PC-9 (cell line): ENCODE measurements at regions of chr17 and their contacts with region 1.

Region 1: DNA sequence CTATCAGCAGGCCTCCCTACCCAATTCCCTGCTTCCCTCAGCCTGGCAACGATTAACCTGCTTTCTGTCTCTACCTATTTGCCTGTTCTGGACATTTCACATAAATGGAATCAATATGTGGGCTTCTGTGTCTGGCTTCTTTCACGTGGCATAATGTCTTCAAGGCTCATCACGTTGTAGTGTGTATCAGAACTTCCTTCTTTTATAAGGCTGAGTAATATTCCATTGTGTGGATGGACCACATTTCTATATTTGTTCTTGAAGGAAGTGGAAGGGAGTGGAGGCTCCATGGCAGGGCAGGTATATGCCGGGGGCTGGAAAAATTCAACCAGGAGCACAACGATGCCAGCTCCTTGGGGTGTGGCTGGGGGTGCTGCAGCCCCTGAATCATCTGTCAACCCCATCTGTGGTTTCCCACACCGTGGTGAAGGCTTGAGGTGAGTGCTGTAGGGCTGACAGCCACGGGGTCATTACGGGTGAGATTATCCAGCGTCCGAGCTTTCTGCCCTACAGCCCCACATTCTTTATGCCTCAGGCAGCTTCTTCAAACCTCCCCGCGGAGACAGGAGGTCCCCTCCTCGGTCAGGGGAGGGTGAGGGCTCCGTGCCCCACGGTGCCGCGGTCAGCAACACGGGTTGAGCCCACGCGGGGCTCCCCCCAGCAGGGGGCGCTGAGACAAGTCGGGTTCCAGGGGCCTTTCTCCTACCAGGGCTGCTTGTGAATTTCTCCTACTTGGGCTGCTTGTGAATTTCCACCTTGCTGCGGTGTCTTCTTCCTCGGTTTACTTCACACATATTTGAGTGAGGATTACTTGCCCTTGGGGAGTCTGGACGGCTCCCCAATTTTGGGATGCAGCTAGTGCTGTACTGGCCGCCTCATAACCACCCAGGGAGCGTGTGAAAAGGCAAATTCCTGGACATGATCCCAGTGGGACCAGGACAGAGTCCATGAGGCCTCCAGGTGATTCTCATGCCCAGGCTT is 18.3 kb upstream of the WFIKKN2 start:
- DNase-seq: peak in 1 of 2 experiments; percentile 24
- H3K4me3 ChIP-seq: no peak overlapping the region
- H3K27ac ChIP-seq: no peak overlapping the region
- H3K4me1 ChIP-seq: peaks cover 20% of the 10 kb centered on the region
- H3K27me3 ChIP-seq: no peaks in the 10 kb centered on the region
- CTCF ChIP-seq: peak; percentile 76

Region 2: DNA sequence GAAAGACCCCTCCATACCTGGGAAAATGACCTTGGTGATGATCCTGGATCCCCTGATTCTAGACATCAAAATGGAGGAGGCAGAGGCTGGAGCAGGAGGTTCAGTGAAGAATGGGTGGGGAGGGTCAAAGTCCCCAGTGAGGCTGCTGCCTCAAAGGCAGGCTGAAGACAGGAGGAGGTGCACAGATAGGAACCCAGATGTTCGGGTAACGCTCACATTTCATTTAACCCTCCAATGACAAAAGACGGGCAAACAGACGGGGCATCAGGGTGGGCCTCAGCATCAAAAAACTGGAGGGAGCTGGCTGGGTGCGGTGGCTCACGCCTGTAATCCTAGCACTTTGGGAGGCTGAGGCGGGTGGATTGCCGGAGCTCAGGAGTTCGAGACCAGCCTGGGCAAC is 49.6 kb before region 1 on chr17 and contains the start of gene ANKRD40CL:
- CTCF ChIA-PET with region 1: interaction called, 24 read pairs
- POLR2A ChIA-PET with region 1: no interaction called
- intact Hi-C with region 1: no loop called
- DNase-seq: no peak
- H3K4me3 ChIP-seq: peak within 1 kb of the TSS; percentile 30; the same call in 1 of the 2 replicates
- H3K27ac ChIP-seq: peak within 1 kb of the TSS; percentile 54
- H3K4me1 ChIP-seq: peaks cover 32% of the 10 kb centered on the region
- H3K27me3 ChIP-seq: no peaks in the 10 kb centered on the region
- CTCF ChIP-seq: no peak
- total RNA-seq, gene ANKRD40CL: not detected in 2 replicates

Region 3: DNA sequence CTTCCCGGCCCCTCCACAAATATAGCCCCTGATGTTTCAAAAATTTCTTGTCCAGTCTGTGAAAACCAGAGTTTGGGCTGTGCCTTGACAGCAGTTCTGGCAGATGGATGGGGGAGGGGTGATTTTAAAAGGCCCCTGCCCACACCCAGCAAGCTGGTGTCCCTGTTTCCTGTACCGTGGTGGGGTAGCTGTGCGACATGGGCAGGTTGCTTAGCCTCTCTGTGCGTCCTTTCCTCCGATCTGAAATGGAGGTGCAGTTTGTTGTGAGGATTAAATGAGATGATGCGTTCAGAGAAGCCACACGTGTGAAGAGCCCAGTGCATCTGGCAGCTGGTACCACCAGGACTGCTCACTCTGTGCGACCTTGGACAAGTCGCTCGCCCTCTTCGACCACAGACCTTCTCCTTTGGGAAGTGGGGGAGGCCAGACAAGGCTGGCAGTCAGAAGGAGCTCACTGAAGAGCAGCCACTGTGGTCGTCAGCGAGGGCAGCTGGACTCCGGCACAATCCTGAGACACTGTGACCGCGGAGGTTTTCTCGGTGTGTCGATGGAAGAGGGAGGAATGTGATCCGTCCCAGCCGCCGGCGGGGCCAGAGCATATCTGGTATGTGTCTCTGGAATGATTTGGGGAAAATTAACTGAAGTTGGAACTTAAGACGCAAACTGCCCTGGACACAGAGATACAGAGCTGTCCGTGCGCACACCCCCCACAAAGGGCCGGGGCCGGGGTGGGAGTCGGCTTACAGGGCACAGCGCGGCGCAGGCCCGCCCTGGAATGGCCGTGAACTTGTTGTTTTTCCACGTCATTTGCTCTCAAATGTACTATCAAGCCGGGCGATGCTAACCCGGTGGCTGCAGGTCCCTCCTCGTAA is 17.6 kb after region 1 on chr17:
- CTCF ChIA-PET with region 1: no interaction called
- POLR2A ChIA-PET with region 1: interaction called, 11 read pairs
- intact Hi-C with region 1: no loop called
- DNase-seq: peak in 1 of 2 experiments; percentile 2
- H3K4me3 ChIP-seq: no peak overlapping the region
- H3K27ac ChIP-seq: no peak overlapping the region
- H3K4me1 ChIP-seq: no peaks in the 10 kb centered on the region
- H3K27me3 ChIP-seq: peaks cover 27% of the 10 kb centered on the region
- CTCF ChIP-seq: no peak